Caco-2 (cell line): ENCODE measurements at regions of chr3 and their contacts with region 1.

Region 1: DNA sequence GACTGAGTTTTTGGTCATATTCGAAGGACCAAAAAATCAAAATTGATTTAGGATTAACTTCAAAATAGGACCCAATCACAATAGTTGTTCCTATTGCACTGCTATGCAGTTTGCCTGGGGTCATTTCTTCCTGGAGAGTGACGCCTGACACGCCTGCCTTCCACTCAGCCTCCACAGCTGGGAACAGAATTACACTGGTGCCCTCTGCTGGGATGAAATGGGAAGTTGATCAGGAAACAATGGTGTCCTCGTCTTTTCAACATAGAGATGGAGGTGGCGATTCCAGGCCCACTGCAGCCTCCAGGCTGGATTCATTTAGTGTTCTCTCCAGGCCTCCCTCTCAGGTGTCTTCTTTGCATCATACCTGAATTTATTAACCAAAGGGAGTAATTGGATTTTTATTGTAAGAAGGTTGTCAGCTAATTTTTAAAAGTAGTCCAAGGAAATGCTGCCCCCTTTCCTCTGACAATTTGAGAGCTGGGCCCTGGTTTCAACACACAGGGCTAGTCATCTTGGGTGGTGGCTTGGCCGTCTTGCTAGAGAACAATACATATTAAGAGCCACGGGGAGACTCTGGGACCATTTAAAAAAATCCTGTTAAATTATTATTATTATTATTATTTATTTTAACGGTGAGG is 69.7 kb downstream of the GAP43 start:
- DNase-seq: peak; percentile 73 to 84
- H3K4me3 ChIP-seq: no peak overlapping the region
- H3K4me3 Mint-ChIP-seq: no peak overlapping the region
- H3K27ac Mint-ChIP-seq: no peak overlapping the region
- H3K4me1 ChIP-seq: no peaks in the 10 kb centered on the region
- H3K4me1 Mint-ChIP-seq: no peaks in the 10 kb centered on the region
- H3K27me3 ChIP-seq: no peaks in the 10 kb centered on the region
- H3K27me3 Mint-ChIP-seq: peaks cover 13% of the 10 kb centered on the region
- CTCF ChIP-seq: peak; percentile 77 to 79

Region 2: GRCh38 chr3:114827495-114827894 is 865.5 kb before region 1 on chr3:
- CTCF ChIA-PET with region 1: no interaction called
- POLR2A ChIA-PET with region 1: no interaction called
- intact Hi-C with region 1: loop called (anchors 5 kb)
- DNase-seq: peak in 1 of 2 experiments; percentile 47
- H3K4me3 ChIP-seq: no peak overlapping the region
- H3K4me3 Mint-ChIP-seq: no peak overlapping the region
- H3K27ac Mint-ChIP-seq: no peak overlapping the region
- H3K4me1 ChIP-seq: no peaks in the 10 kb centered on the region
- H3K4me1 Mint-ChIP-seq: no peaks in the 10 kb centered on the region
- H3K27me3 ChIP-seq: no peaks in the 10 kb centered on the region
- H3K27me3 Mint-ChIP-seq: no peaks in the 10 kb centered on the region
- CTCF ChIP-seq: peak; percentile 63 to 70

Region 3: DNA sequence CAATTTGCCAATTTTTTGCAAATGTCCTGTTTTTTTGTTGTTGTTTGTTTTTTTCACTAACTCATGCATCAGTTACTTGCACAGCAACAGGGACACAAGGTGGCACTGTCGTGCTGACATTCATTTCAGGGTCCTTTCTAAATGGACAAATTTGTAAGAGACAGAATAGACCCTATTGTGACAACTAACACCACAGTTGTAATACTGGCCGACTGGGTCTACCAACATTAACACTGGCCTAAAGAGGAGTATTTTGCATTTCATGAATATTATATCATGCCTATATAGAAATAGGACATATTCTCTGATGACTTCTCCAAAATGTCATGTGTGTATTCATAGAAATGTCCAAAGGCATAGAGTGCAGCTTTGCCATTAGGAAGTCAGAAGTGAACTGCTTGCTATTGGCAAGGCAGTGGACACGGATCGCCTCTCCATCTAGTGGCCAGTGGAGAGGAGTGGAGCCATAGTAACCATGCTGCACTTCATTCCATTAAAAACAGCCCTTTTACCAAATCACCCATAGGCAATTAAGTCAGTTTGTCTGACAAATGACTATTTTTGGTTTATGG is 600.7 kb before region 1 on chr3:
- CTCF ChIA-PET with region 1: no interaction called
- POLR2A ChIA-PET with region 1: no interaction called
- intact Hi-C with region 1: loop called (anchors 1 kb)
- DNase-seq: peak; percentile 53 to 56
- H3K4me3 ChIP-seq: no peak overlapping the region
- H3K4me3 Mint-ChIP-seq: no peak overlapping the region
- H3K27ac Mint-ChIP-seq: no peak overlapping the region
- H3K4me1 ChIP-seq: no peaks in the 10 kb centered on the region
- H3K4me1 Mint-ChIP-seq: no peaks in the 10 kb centered on the region
- H3K27me3 ChIP-seq: no peaks in the 10 kb centered on the region
- H3K27me3 Mint-ChIP-seq: peaks cover 5% of the 10 kb centered on the region
- CTCF ChIP-seq: peak; percentile 49 to 68

Region 4: DNA sequence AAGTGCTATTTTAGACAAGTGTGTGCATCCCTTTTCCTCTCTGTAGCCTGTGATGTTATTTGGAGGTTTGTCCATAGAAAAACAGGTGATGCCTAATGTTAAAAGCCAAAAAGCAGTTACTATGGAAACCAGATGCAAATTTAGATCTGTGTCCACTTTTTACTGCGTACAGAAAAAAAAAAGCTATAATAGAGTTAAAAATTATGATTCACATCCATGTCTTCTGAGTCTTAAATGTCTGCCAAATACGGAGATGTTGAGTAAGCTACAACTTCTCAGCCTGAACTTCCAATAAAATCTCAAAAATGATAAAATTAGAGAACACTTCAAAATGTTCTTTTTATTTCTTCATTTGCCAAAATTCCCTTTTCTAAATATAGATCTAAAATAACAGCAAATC is 143.9 kb before region 1 on chr3:
- CTCF ChIA-PET with region 1: no interaction called
- POLR2A ChIA-PET with region 1: no interaction called
- intact Hi-C with region 1: loop called (anchors 10 kb)
- DNase-seq: no peak
- H3K4me3 ChIP-seq: no peak overlapping the region
- H3K4me3 Mint-ChIP-seq: no peak overlapping the region
- H3K27ac Mint-ChIP-seq: no peak overlapping the region
- H3K4me1 ChIP-seq: no peaks in the 10 kb centered on the region
- H3K4me1 Mint-ChIP-seq: no peaks in the 10 kb centered on the region
- H3K27me3 ChIP-seq: no peaks in the 10 kb centered on the region
- H3K27me3 Mint-ChIP-seq: peaks cover 15% of the 10 kb centered on the region
- CTCF ChIP-seq: no peak

Region 5: GRCh38 chr3:115783938-115784738 is 91.1 kb after region 1 on chr3:
- CTCF ChIA-PET with region 1: interaction called, 12 read pairs
- POLR2A ChIA-PET with region 1: no interaction called
- intact Hi-C with region 1: loop called (anchors 1 kb)
- DNase-seq: peak; percentile 94
- H3K4me3 ChIP-seq: peak overlapping the region; percentile 57
- H3K4me3 Mint-ChIP-seq: peak overlapping the region; percentile 67
- H3K27ac Mint-ChIP-seq: peak overlapping the region; percentile 74
- H3K4me1 ChIP-seq: no peaks in the 10 kb centered on the region
- H3K4me1 Mint-ChIP-seq: peaks cover 12% of the 10 kb centered on the region
- H3K27me3 ChIP-seq: no peaks in the 10 kb centered on the region
- H3K27me3 Mint-ChIP-seq: peaks cover 7% of the 10 kb centered on the region
- CTCF ChIP-seq: peak; percentile 86 to 90